Activated CD8-positive, alpha-beta T cell treated with anti-CD3 and anti-CD28 coated beads for 36 hours (primary cell): ENCODE measurements at regions of chr9 and their contacts with region 1.

Region 1: DNA sequence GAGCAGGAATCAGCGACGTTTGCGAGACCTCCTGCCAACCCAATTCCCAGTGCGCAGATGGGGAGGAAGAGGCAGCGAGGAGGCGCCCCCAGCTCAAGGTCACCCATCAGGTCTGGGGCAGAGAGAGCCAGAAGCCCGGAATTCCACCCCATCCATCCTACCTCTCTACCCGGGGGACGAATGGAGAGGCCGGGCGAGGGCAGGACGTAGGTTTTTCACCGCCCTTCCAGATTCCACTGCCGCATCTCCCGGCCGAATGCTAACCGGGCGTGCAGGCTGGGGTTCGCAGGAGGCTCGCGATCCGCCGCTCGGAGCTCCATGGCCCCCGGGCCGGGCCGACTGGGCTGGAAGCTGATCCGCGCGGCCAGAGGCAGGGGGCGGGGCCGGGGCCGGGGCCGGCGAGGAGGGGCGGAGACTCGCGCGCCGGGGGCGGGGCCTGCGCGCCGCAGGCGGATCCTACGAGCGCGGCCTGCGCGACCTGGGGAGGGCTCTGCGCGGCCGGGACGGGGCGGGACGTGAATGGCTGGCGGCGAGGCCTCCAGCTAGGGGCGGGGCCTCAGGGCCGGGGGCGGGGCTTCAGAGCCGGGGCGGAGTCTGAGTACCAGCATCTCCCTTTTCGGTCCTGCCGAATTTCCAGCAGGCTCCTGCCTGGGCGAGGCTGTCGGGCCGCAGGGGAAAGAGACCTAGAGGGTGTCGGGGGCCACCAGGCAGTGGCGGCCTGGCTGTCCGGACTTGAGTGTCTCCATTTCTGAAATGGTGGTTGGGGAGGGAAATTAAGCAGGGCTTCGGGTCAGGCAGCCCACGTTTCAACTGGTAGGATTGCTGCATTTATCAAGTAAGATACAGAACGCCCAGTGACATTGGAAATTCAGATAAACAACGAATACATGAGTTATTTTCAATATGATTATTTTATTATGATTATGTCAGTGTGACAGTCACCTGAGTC is at the start of gene ST6GALNAC4:
- DNase-seq: peak; percentile 97
- ATAC-seq: peak; percentile 96
- H3K4me3 Mint-ChIP-seq: peak within 1 kb of the TSS; percentile 87
- H3K27ac Mint-ChIP-seq: peak within 1 kb of the TSS; percentile 93
- H3K4me1 Mint-ChIP-seq: peaks cover 53% of the 10 kb centered on the region
- H3K27me3 Mint-ChIP-seq: no peaks in the 10 kb centered on the region
- CTCF ChIP-seq: no peak
- total RNA-seq, gene ST6GALNAC4: 34.3 to 34.9 TPM

Region 2: GRCh38 chr9:127586537-127586936 is 330.4 kb before region 1 on chr9:
- CTCF ChIA-PET with region 1: interaction called, 13 read pairs
- POLR2A ChIA-PET with region 1: no interaction called
- intact Hi-C with region 1: no loop called
- DNase-seq: peak; percentile 77
- ATAC-seq: peak; percentile 76
- H3K4me3 Mint-ChIP-seq: no peak overlapping the region
- H3K27ac Mint-ChIP-seq: no peak overlapping the region
- H3K4me1 Mint-ChIP-seq: peaks cover 6% of the 10 kb centered on the region
- H3K27me3 Mint-ChIP-seq: peaks cover 9% of the 10 kb centered on the region
- CTCF ChIP-seq: peak; percentile 80

Region 3: GRCh38 chr9:127779136-127779981 is 137.6 kb before region 1 on chr9:
- CTCF ChIA-PET with region 1: interaction called, 38 read pairs
- POLR2A ChIA-PET with region 1: interaction called, 12 read pairs
- intact Hi-C with region 1: loop called (anchors 5 kb)
- DNase-seq: peak; percentile 87
- ATAC-seq: peak; percentile 57
- H3K4me3 Mint-ChIP-seq: peak overlapping the region; percentile 99
- H3K27ac Mint-ChIP-seq: peak overlapping the region; percentile 99
- H3K4me1 Mint-ChIP-seq: peaks cover 47% of the 10 kb centered on the region
- H3K27me3 Mint-ChIP-seq: no peaks in the 10 kb centered on the region
- CTCF ChIP-seq: no peak

Region 4: GRCh38 chr9:127862075-127863011 is 54.6 kb before region 1 on chr9:
- CTCF ChIA-PET with region 1: interaction called, 13 read pairs
- POLR2A ChIA-PET with region 1: interaction called, 3 read pairs
- intact Hi-C with region 1: no loop called
- DNase-seq: peak; percentile 64
- ATAC-seq: peak; percentile 53
- H3K4me3 Mint-ChIP-seq: no peak overlapping the region
- H3K27ac Mint-ChIP-seq: peak overlapping the region; percentile 86
- H3K4me1 Mint-ChIP-seq: peaks cover 36% of the 10 kb centered on the region
- H3K27me3 Mint-ChIP-seq: no peaks in the 10 kb centered on the region
- CTCF ChIP-seq: no peak

Region 5: DNA sequence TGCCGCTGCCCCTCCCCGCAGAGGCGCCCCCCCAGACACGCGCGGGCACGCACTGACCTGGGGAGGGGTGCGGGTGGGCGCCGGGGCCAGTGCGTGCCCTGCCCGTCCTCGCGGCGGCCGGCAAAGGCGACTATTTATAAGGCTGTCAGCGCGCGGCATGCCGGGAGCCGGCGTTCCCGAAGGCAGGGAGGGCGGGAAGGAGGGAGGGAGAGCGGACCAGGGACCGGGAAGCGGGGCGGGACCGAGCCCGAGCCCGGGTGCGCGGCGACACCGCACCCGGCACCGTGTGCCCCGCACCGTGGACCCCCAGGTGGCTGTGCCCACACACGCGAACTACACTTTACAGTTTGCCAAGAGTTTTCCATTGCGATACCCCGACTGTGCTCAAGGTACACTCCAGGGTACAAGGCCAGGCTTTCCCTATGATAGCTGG is 39.4 kb before region 1 on chr9 and contains the start of gene AK1:
- CTCF ChIA-PET with region 1: interaction called, 12 read pairs
- POLR2A ChIA-PET with region 1: interaction called, 5 read pairs
- intact Hi-C with region 1: no loop called
- DNase-seq: no peak
- ATAC-seq: no peak
- H3K4me3 Mint-ChIP-seq: no peak within 1 kb of the TSS
- H3K27ac Mint-ChIP-seq: no peak within 1 kb of the TSS
- H3K4me1 Mint-ChIP-seq: peaks cover 5% of the 10 kb centered on the region
- H3K27me3 Mint-ChIP-seq: peaks cover 7% of the 10 kb centered on the region
- CTCF ChIP-seq: no peak
- total RNA-seq, gene AK1: 12.1 to 14.8 TPM

Region 6: DNA sequence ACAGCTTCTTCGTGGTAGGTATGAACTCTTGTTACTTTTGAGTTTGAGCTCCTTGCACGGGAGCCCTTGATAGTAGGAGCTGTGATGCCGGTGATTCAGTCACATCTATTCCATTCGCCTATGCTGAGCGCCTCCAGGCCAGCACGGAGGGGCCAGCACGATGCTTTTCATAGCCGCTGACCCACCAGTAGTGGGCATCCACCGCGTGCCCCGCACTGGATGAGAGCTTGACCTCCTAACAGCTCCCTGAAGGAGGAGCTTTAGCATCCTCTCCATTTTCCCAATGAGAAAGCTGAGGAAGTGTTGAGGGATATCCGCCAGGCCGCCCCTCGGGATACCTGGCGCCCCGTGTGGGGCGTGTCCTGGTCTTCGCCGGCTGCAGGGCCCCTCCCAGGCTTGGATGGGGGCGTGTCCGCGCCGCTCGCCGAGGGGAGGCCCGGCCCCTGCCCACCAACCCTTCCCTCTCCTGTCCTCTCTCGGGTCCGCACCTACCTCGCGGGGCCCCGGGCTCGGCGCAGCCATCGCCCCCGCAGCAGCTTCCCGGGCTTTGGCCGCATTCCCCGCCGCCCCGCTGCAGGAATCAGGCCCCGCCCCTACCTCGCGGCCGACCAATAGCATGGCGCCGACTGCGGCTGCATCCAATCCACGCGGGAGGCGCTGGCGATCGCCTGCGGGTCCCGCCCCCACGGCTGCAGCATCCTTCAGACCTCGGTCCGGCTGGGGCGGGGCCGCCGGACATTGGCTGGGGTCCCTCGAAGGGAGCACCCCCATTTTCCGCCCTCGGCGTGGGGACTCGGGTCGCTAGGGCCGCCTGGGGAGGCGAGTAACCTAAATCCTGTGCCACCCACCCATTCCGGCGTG is 13.5 kb after region 1 on chr9 and contains the start of gene PIP5KL1:
- CTCF ChIA-PET with region 1: interaction called, 10 read pairs
- POLR2A ChIA-PET with region 1: interaction called, 6 read pairs
- intact Hi-C with region 1: no loop called
- DNase-seq: peak; percentile 74
- ATAC-seq: peak; percentile 70
- H3K4me3 Mint-ChIP-seq: peak within 1 kb of the TSS; percentile 51
- H3K27ac Mint-ChIP-seq: no peak within 1 kb of the TSS
- H3K4me1 Mint-ChIP-seq: peaks cover 35% of the 10 kb centered on the region
- H3K27me3 Mint-ChIP-seq: no peaks in the 10 kb centered on the region
- CTCF ChIP-seq: no peak
- total RNA-seq, gene PIP5KL1: 1.7 to 2.5 TPM